HepG2 (cell line): ENCODE measurements at regions of chr13 and their contacts with region 1.

Region 1: GRCh38 chr13:110915057-110915873 is at the start of gene ANKRD10:
- DNase-seq: peak; percentile 97
- ATAC-seq: peak; percentile 90
- H3K4me3 ChIP-seq: peak within 1 kb of the TSS; percentile 96 to 100 (median 99)
- H3K27ac ChIP-seq: peak within 1 kb of the TSS; percentile 100
- H3K4me1 ChIP-seq: peaks cover 39% of the 10 kb centered on the region
- H3K27me3 ChIP-seq: no peaks in the 10 kb centered on the region; a peak in 1 of 5 replicates
- CTCF ChIP-seq: peak; percentile 85
- EP300 ChIP-seq: no peak
- POLR2A ChIP-seq: peak; percentile 87
- RAD21 ChIP-seq: peak; percentile 72; the same call in 1 of the 2 replicates
- total RNA-seq, gene ANKRD10: 59.6 and 108 TPM in 2 replicates

Region 2: DNA sequence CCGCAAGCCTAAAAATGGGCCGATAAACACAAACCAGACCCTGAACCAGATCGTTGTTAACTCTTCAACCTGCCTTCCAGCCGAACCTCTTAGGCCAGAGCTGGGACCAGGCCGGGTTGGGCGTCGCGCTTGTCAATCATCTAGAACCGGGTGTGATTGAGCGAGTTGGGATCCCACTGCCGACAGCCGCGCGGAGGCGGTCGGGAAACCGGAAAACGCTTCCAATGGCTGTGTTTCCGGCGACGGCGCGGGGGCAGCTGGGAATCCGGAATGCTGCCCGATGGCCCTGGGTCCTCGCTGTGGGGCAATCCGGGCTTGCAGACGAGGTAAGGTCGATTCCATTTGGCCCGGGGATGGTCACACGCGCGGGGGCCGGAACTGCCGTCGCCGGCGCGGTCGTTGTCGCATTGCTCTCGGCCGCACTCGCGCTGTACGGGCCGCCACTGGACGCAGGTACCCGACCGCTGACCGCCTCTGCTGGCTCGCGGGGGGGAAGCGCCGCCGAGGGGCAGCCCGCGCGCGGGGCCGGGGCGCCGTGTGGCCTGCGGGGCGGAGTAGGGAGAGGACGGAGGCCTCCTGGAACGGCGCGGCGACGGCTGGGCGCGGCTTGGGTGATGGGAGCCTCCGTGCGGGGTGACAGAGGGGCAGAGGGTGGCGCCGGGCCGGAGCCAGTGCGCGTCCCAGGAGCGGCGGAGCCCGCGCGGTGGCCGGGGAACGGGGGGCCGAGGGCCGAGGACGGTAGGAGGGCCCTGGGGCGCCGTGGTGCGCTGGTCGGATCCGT is 299.8 kb before region 1 on chr13 and contains the start of gene NAXD:
- CTCF ChIA-PET with region 1: no interaction called
- POLR2A ChIA-PET with region 1: interaction called, 10 read pairs
- in situ Hi-C with region 1: no loop called
- intact Hi-C with region 1: no loop called
- DNase-seq: peak; percentile 89
- ATAC-seq: peak; percentile 95
- H3K4me3 ChIP-seq: peak within 1 kb of the TSS; percentile 96 to 97 (median 97)
- H3K27ac ChIP-seq: peak within 1 kb of the TSS; percentile 83
- H3K4me1 ChIP-seq: peaks cover 62% of the 10 kb centered on the region
- H3K27me3 ChIP-seq: peaks cover 1 to 13% of the 10 kb centered on the region in 2 experiments; a peak in 3 of 5 replicates
- CTCF ChIP-seq: no peak; the same call in 1 of the 2 replicates
- EP300 ChIP-seq: 0 out of 4 replicates have a peak, but pooled peaks of 1 of the 2 experiments have one; percentile 15
- POLR2A ChIP-seq: peak; percentile 73 to 83
- RAD21 ChIP-seq: peak; percentile 19; the same call in 1 of the 2 replicates
- total RNA-seq, gene NAXD: 18.5 and 19.0 TPM in 2 replicates

Region 3: DNA sequence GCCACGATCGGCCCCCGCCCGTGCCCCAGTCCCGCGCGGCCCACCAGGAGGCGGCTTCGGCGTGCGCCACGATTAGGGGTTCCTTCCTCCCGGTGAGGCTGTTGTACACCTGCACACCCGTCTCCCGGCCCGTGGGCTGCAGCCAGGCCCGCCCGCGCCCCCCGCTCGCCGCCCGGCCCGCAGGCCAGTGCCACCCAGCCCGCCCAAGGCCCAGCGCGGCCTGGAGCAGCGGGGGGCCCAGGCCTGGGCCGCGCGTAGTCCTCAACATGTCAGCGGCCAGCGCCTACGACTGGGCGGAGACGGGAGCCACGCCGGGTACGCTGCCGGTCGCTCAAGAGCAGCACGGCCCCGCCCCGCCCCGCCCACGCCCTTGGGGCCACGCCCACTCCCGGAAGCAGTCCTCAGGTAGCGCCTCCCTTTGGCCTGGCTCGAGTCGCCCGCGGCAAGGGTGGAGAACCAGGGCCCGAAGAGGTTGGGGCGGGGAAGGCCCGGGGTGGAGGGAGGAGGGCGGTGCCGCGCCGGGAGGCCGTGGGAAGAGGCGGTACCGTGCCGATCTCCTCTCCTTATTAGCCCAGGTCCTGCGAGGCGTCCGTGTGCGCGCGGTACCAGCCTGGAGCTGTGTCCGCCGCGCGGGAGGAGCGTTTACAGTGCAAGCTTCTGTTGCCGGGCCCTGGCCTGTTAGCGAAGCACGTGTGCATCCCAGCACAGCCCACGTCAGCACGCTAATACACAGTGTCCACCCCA is 209.3 kb before region 1 on chr13 and contains the start of gene CARS2:
- CTCF ChIA-PET with region 1: no interaction called
- POLR2A ChIA-PET with region 1: interaction called, 3 read pairs
- in situ Hi-C with region 1: loop called (anchors 10 kb)
- intact Hi-C with region 1: no loop called
- DNase-seq: peak; percentile 94
- ATAC-seq: peak; percentile 98
- H3K4me3 ChIP-seq: peak within 1 kb of the TSS; percentile 72 to 97 (median 92)
- H3K27ac ChIP-seq: peak within 1 kb of the TSS; percentile 73
- H3K4me1 ChIP-seq: peaks cover 58% of the 10 kb centered on the region
- H3K27me3 ChIP-seq: no peaks in the 10 kb centered on the region; a peak in 1 of 5 replicates
- CTCF ChIP-seq: peak; percentile 61
- EP300 ChIP-seq: no peak
- POLR2A ChIP-seq: peak in 1 of 2 experiments; percentile 78; a peak in 2 of 4 replicates
- RAD21 ChIP-seq: peak; percentile 33; the same call in 1 of the 2 replicates
- total RNA-seq, gene CARS2: 54.3 and 59.3 TPM in 2 replicates

Region 4: GRCh38 chr13:110715395-110716235 is 199.7 kb before region 1 on chr13:
- CTCF ChIA-PET with region 1: no interaction called
- POLR2A ChIA-PET with region 1: interaction called, 12 read pairs
- in situ Hi-C with region 1: no loop called
- intact Hi-C with region 1: loop called (anchors 2 kb)
- DNase-seq: peak; percentile 99
- ATAC-seq: peak; percentile 75
- H3K4me3 ChIP-seq: peak overlapping the region; percentile 76 to 98 (median 96)
- H3K27ac ChIP-seq: peak overlapping the region; percentile 89
- H3K4me1 ChIP-seq: peaks cover 16% of the 10 kb centered on the region
- H3K27me3 ChIP-seq: no peaks in the 10 kb centered on the region; a peak in 1 of 5 replicates
- CTCF ChIP-seq: peak; percentile 31; the same call in 1 of the 2 replicates
- EP300 ChIP-seq: no peak
- POLR2A ChIP-seq: no peak; a peak in 1 of 4 replicates
- RAD21 ChIP-seq: no peak; the same call in 1 of the 2 replicates

Region 5: GRCh38 chr13:110856942-110857835 is 58.1 kb before region 1 on chr13:
- CTCF ChIA-PET with region 1: no interaction called
- POLR2A ChIA-PET with region 1: no interaction called
- in situ Hi-C with region 1: no loop called
- intact Hi-C with region 1: no loop called
- DNase-seq: no peak
- ATAC-seq: no peak
- H3K4me3 ChIP-seq: no peak overlapping the region
- H3K27ac ChIP-seq: no peak overlapping the region
- H3K4me1 ChIP-seq: no peaks in the 10 kb centered on the region
- H3K27me3 ChIP-seq: peaks cover 0 to 16% of the 10 kb centered on the region in 2 experiments; a peak in 1 of 5 replicates
- CTCF ChIP-seq: no peak
- EP300 ChIP-seq: no peak
- POLR2A ChIP-seq: no peak
- RAD21 ChIP-seq: no peak

Region 6: GRCh38 chr13:110874508-110874960 is 40.7 kb before region 1 on chr13:
- CTCF ChIA-PET with region 1: no interaction called
- POLR2A ChIA-PET with region 1: interaction called, 11 read pairs
- in situ Hi-C with region 1: no loop called
- intact Hi-C with region 1: no loop called
- DNase-seq: peak; percentile 37
- ATAC-seq: peak; percentile 81
- H3K4me3 ChIP-seq: peak overlapping the region; percentile 47 to 61 (median 60)
- H3K27ac ChIP-seq: no peak overlapping the region
- H3K4me1 ChIP-seq: peaks cover 51% of the 10 kb centered on the region
- H3K27me3 ChIP-seq: peaks cover 0 to 16% of the 10 kb centered on the region in 2 experiments; a peak in 2 of 5 replicates
- CTCF ChIP-seq: no peak
- EP300 ChIP-seq: no peak
- POLR2A ChIP-seq: no peak
- RAD21 ChIP-seq: no peak